PC-3 (cell line): ENCODE measurements at regions of chr20 and their contacts with region 1.

Region 1: DNA sequence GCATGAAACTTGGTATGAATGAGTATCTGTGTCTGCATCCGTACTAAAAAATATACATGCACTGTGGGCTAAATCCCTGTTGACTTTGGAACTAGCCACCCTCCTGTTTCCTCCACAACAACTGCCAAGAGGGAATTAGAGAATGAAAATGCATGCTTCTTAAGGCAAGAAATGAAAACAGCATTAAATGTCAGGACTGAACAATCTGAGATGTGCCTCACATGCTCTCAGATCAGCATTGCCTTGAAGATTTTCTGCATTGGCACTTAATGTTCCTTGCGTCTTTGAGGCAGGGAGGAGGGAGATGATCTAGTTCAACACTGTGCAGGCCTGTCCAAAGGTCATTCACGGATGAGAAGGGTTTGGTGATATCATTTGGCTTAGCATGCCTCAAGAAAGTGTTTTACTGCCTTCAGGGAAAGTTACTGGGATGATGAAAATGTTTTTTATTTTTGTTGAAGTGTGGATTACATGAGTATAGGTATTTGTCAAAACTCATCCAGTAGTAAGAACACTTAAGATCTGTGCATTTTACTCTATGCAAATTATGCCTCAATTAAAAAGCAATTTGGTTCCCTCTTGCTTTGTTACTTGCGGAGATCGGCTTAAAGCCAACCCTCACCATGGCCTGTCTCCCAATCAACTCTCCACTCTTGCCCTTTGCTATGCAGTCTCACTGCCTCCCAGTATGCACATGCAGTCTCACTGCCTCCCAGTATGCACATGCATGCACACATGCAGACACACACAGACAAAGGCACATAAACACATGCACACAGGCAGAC is 47.5 kb upstream of the RIN2 start:
- DNase-seq: no peak
- ATAC-seq: peak; percentile 42
- H3K4me3 ChIP-seq: no peak overlapping the region
- H3K27ac ChIP-seq: no peak overlapping the region
- H3K4me1 ChIP-seq: peaks cover 18% of the 10 kb centered on the region
- H3K27me3 ChIP-seq: no peaks in the 10 kb centered on the region
- CTCF ChIP-seq: no peak

Region 2: DNA sequence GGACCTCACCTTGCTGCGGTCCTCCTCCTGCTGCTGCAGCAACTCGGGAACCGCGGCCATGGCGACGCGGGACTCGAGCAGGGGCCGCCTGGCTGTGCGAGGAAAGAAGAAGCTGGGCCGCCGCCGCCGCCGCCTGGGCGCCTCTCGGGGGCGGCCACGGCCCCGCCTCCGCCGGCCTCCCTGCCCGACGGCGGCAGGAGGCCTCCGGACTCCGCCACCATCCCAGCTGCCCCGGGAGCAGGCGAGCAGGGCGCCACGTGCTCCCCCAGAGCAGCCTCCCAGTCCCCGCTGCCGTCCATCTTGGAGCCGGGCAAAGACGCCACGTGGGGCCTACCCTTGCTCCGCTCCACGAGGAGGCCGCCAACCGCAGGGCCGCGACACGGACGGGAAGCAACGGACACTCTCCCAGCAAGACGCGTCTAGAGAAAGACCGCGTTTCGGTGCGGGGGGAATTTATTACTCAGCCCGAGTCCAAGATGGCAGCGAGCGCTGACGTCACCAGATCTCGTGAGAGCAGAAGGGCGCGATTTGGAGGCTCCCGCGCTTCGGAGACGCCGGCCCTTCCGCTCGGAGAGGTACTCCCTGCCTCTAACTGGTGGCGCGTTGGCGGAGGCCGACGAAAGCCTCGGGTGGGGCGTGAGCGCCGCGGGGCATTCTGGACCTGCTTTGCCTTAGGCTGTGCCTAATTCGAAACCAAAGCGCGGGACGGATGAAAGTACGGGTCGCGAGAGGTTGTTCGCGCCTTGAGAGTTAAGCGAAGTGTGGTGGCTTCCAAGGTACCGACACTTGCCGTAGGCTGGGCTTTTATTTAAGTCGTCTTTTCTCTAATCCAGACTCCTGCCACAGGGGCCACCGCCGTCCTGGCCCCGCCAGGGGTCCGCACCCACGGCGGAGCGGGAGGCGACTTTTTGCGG is 1741.9 kb before region 1 on chr20 and contains the starts of genes MGME1 and SNX5:
- CTCF ChIA-PET with region 1: no interaction called
- POLR2A ChIA-PET with region 1: interaction called, 19 read pairs
- intact Hi-C with region 1: no loop called
- DNase-seq: peak; percentile 100
- ATAC-seq: peak; percentile 84
- H3K4me3 ChIP-seq: peak within 1 kb of the TSS; percentile 74
- H3K27ac ChIP-seq: peak within 1 kb of the TSS; percentile 95
- H3K4me1 ChIP-seq: peaks cover 59% of the 10 kb centered on the region
- H3K27me3 ChIP-seq: no peaks in the 10 kb centered on the region
- CTCF ChIP-seq: no peak
- total RNA-seq, gene MGME1: 15.1 and 18.8 TPM in 2 replicates
- total RNA-seq, gene SNX5: 159 and 189 TPM in 2 replicates

Region 3: GRCh38 chr20:18916886-18917750 is 793.4 kb before region 1 on chr20:
- CTCF ChIA-PET with region 1: no interaction called
- POLR2A ChIA-PET with region 1: no interaction called
- intact Hi-C with region 1: no loop called
- DNase-seq: peak; percentile 22
- ATAC-seq: no peak
- H3K4me3 ChIP-seq: no peak overlapping the region
- H3K27ac ChIP-seq: no peak overlapping the region
- H3K4me1 ChIP-seq: peaks cover 6% of the 10 kb centered on the region; the same call in 1 of the 2 replicates
- H3K27me3 ChIP-seq: no peaks in the 10 kb centered on the region
- CTCF ChIP-seq: no peak

Region 4: DNA sequence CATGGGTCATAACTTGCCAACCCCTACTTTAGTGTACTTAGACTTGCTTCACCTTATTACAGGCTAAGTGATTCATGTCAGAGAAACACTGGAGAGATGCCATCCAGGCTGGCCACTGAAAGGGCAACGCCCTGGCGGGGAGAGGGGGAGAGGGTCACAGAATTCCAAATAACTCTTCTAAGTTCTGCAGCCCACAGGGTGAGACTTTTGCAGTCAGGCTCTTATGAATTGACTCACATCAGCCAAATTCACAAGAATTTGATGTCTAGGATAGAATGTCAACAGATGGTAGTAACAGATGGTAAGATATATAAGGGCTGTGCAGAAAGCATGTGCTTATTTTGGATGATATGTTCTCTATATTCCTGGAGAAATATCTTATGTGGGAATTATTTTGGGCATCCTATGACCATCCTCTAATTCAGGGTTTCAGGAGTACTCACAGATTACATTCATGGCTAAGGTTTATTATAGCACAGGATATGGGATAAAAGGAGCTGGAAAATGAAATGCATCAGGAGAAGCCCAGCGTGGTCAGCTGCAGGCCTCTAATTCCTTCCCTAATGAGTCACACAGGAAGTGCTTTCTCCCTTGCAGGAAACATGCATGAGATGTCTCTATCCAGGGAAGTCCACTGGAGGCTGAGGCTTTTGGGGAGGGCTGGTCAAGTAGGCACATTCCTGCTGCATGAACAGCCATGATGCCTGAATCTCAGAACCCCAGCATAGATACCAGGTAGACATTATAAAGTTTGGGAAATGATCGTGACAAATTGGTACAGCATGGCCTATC is 11.2 kb before region 1 on chr20:
- CTCF ChIA-PET with region 1: no interaction called
- POLR2A ChIA-PET with region 1: no interaction called
- intact Hi-C with region 1: no loop called
- DNase-seq: peak; percentile 81
- ATAC-seq: peak; percentile 84
- H3K4me3 ChIP-seq: no peak overlapping the region
- H3K27ac ChIP-seq: peak overlapping the region; percentile 47
- H3K4me1 ChIP-seq: peaks cover 29% of the 10 kb centered on the region
- H3K27me3 ChIP-seq: no peaks in the 10 kb centered on the region
- CTCF ChIP-seq: no peak

Region 5: GRCh38 chr20:19725814-19726525 is 15.4 kb after region 1 on chr20:
- CTCF ChIA-PET with region 1: no interaction called
- POLR2A ChIA-PET with region 1: no interaction called
- intact Hi-C with region 1: loop called (anchors 2 kb)
- DNase-seq: peak; percentile 59
- ATAC-seq: peak; percentile 95
- H3K4me3 ChIP-seq: no peak overlapping the region
- H3K27ac ChIP-seq: no peak overlapping the region
- H3K4me1 ChIP-seq: peaks cover 11% of the 10 kb centered on the region
- H3K27me3 ChIP-seq: no peaks in the 10 kb centered on the region
- CTCF ChIP-seq: no peak

Region 6: DNA sequence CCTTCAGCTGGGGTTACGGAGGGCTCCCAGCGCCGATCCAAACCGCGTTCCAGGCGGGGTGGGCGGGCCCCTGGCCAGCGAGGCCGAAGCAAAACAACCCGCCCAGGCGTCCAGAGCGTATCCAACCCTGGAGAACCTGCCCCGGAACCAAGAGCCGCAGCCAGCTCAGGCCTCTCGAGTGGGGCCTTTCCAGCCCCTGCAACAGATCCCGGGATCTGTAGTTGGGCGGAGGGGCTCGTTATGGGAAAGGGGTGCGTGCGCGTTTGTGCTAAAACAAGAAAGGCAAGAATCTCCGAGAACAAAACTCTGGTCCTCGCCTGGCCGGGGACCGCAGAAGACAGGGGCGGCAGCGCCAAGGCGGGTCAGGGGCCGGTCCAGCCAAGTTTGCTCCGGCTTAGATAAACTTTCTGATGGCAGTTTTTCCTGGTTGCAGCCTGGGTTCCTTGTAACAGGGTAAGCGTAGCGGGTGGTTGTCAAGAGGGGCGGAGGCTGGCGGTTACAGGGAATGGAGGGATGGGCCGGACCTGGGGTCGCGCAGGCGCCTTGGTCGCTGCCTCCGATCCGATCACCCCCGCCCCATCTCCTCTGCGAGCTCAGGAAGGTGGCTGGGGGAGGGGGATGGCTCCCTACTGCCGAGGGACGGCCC is 47.1 kb after region 1 on chr20:
- CTCF ChIA-PET with region 1: no interaction called
- POLR2A ChIA-PET with region 1: interaction called, 4 read pairs
- intact Hi-C with region 1: loop called (anchors 2 kb)
- DNase-seq: peak; percentile 96
- ATAC-seq: peak; percentile 77
- H3K4me3 ChIP-seq: peak overlapping the region; percentile 89
- H3K27ac ChIP-seq: peak overlapping the region; percentile 87
- H3K4me1 ChIP-seq: peaks cover 32% of the 10 kb centered on the region
- H3K27me3 ChIP-seq: no peaks in the 10 kb centered on the region
- CTCF ChIP-seq: no peak

Region 7: GRCh38 chr20:19995220-19995863 is 284.8 kb after region 1 on chr20:
- CTCF ChIA-PET with region 1: no interaction called
- POLR2A ChIA-PET with region 1: interaction called, 13 read pairs
- intact Hi-C with region 1: no loop called
- DNase-seq: peak; percentile 77
- ATAC-seq: no peak
- H3K4me3 ChIP-seq: no peak overlapping the region
- H3K27ac ChIP-seq: peak overlapping the region; percentile 96
- H3K4me1 ChIP-seq: peaks cover 53% of the 10 kb centered on the region
- H3K27me3 ChIP-seq: no peaks in the 10 kb centered on the region
- CTCF ChIP-seq: peak; percentile 97